Colonic mucosa (tissue), 4 donors: ENCODE measurements at regions of chr13 and their contacts with region 1.

Region 1: GRCh38 chr13:20197361-20197834 is 4.7 kb upstream of the GJB2 start:
- DNase-seq: no peak
- H3K4me3 ChIP-seq: no peak overlapping the region
- H3K27ac ChIP-seq: no peak overlapping the region
- H3K4me1 ChIP-seq: peaks cover 5% of the 10 kb centered on the region
- H3K27me3 ChIP-seq: peaks cover 34% of the 10 kb centered on the region
- CTCF ChIP-seq: peak; percentile 87

Region 2: GRCh38 chr13:19959831-19960652 is 237.4 kb before region 1 on chr13:
- intact Hi-C with region 1: no loop called
- DNase-seq: peak; percentile 87
- H3K4me3 ChIP-seq: peak overlapping the region; percentile 76
- H3K27ac ChIP-seq: peak overlapping the region; percentile 98
- H3K4me1 ChIP-seq: peaks cover 7% of the 10 kb centered on the region
- H3K27me3 ChIP-seq: no peaks in the 10 kb centered on the region
- CTCF ChIP-seq: peak; percentile 90

Region 3: GRCh38 chr13:20412691-20413355 is 215.4 kb after region 1 on chr13:
- intact Hi-C with region 1: no loop called
- DNase-seq: no peak
- H3K4me3 ChIP-seq: no peak overlapping the region
- H3K27ac ChIP-seq: no peak overlapping the region
- H3K4me1 ChIP-seq: peaks cover 3% of the 10 kb centered on the region
- H3K27me3 ChIP-seq: no peaks in the 10 kb centered on the region
- CTCF ChIP-seq: no peak

Region 4: DNA sequence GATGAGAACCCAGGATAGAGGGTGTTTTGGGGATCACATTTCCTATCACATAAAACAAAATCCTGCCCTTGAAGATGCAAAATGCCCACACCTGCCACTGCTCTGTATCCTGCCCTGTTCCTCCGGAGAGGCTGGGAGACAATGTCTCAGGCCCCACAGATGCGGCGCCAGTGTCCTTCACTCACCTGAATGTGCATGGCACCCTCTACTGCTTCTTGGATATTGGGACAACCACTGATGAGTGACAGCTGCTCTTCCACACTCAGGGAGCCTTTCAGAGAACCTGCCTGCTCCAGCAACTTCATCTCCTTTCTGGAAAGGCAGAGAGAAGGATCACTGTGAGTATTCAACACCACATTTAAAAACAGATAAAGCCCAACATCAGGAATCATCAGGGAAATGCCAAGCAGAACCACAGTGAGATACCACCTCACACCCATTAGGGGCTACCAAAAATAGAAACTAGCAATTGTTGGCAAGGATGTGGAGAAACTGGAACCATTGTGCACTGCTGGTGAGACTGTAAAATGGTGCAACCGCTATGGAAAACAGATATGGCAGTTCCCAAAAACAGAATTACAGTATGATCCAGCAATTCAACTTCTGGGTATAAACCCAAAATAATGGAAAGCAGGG is 291.9 kb after region 1 on chr13:
- intact Hi-C with region 1: loop called (anchors 5 kb)
- DNase-seq: no peak
- H3K4me3 ChIP-seq: no peak overlapping the region
- H3K27ac ChIP-seq: no peak overlapping the region
- H3K4me1 ChIP-seq: no peaks in the 10 kb centered on the region
- H3K27me3 ChIP-seq: no peaks in the 10 kb centered on the region
- CTCF ChIP-seq: no peak